Activated T-helper 1 cell treated with anti-CD3 and anti-CD28 coated beads, Interleukin-12 subunit alpha, Interleukin-12 subunit beta, Interleukin-2, Interleukin-4 antibody, amounts not matched to agents 30 ng/mL and 10 ng/mL and 1 ng/mL, durations not matched to agents 14 hours and 24 hours and 36 hours (primary cell): ENCODE measurements at regions of chr2 and their contacts with region 1.

Region 1: GRCh38 chr2:160224060-160224459 is 24.0 kb upstream of the ITGB6 start:
- DNase-seq: peak; percentile 23
- H3K4me3 Mint-ChIP-seq: peak overlapping the region; percentile 39
- H3K27ac Mint-ChIP-seq: peak overlapping the region; percentile 32
- H3K4me1 Mint-ChIP-seq: peaks cover 56% of the 10 kb centered on the region
- H3K27me3 Mint-ChIP-seq: peaks cover 5% of the 10 kb centered on the region

Region 2: DNA sequence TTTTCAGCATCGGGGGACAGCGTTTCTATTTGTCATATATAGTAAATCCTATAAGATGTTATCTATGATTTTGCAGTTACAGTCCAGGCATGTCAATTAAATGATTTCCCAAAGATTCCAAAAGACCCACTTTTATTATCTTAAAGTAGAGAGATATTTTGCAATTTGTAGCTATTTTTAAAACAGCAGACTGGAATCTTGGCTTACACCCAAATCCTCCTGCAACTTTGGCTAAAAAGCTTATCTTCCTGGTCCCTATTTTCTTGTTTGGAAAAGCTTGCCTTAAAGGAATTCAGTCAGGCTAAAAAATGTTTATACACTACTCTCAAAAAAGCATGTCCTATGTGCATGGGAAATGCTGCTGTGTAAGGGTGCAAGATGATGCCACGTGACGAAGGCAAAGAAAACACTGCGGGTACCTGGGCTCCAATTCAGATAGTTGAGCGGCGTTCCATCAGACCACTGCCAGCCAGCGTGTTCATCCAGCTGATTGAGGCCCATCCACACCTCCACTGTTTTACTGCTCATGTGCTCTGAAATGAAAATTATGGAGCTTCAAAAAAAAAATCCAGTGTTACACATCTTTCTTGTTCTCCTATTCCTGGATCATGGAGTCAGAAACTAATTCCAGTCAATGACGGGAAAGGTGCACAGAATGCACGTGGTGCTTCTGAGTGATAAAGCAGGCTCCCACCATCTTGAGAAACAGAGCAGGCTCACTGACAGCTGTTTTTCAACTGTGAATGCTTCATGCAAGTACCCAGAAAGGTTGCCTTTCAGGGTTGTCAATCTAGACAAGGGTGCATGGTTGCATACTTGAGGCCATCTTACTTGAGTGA is 195.4 kb before region 1 on chr2:
- intact Hi-C with region 1: no loop called
- DNase-seq: no peak
- H3K4me3 Mint-ChIP-seq: no peak overlapping the region
- H3K27ac Mint-ChIP-seq: no peak overlapping the region
- H3K4me1 Mint-ChIP-seq: no peaks in the 10 kb centered on the region
- H3K27me3 Mint-ChIP-seq: peaks cover 11% of the 10 kb centered on the region

Region 3: DNA sequence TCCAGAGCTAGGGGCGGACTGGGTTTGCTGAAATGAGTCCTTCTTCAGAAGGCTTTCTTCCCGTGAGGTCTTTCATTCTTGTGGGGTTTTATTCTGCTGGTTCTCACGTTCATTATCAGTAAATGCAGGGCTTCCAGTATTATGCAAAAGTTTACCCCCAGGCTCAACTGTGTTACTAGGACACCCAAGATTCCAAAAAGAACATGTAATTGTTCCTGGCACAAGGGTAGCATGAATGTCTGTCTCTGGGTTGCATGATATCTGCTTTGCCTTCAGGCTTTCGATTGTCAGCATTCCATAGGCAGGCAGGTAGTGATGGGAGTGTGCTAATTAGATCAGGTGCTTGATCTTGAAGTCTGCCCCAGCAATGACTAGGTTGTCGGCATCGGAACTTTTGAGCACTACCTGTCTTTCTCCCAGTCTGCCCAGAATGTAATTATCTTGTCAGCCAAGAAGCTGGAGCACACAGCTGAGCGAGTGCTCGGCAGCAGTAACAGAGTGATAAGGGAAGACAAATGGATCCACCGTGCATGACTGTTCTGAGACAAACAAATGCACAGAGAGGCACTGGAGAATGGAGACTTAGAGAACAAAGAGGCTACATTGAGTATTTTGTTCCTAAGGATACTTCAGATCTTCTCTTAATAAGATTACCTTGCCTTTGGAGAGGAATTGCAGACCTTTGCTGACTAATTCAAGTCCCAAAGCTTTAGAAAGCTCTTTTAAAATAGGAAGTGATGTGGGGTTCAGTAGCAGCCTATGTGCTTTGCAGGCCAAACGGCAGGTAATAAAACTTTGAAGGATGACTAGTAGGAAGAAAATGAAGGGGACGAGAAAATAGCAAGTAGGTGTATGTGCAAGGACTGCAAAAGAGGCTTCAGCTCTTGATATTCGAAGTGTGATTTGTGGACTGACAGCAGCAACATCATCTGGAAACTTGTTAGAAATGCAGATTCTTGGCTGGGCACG is 65.9 kb before region 1 on chr2:
- intact Hi-C with region 1: no loop called
- DNase-seq: no peak
- H3K4me3 Mint-ChIP-seq: no peak overlapping the region
- H3K27ac Mint-ChIP-seq: no peak overlapping the region
- H3K4me1 Mint-ChIP-seq: no peaks in the 10 kb centered on the region
- H3K27me3 Mint-ChIP-seq: peaks cover 7% of the 10 kb centered on the region

Region 4: DNA sequence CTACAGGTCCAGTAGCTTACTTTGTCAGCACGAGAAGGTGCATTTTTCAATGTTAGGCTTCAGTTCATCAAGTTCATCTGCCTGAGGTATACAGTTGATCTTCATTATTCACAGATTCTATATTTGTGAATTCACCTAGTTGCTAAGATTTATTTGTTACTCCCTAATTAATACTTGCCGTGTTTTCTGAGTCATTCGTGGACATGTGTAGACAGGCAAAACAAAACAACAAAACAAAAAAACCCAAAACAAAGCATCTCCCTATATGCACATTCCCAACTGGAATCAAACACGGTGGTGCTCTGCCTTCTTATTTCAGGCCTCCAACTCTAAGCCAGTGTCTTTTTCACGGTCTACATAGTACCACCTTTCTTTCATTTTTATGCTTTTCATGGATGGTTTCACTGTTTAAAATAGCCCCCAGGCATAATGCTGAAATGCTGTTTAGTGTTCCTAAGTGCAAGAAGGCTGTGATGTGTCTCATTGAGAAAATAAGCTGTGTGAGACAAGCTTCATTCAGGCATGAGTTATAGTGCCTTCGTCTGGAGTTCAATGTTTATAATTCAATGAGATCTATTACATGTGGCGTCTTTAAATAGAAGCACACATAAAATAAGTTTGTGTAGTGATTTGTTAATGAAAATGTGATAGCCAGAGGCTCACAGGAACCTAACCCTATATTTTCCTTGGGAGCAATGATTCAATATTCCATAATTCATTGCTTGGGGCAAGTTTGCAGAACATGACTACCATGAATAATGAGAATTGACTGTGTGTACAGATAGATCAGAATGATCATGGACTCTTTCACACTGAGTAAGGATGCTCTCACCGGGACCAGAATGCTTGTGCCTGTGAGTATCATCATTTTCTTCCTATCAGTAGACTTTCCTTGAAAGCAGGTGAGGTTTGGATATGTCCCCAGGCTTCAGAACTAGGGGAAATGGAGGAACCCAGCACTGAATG is 48.6 kb before region 1 on chr2:
- intact Hi-C with region 1: no loop called
- DNase-seq: no peak
- H3K4me3 Mint-ChIP-seq: no peak overlapping the region
- H3K27ac Mint-ChIP-seq: no peak overlapping the region
- H3K4me1 Mint-ChIP-seq: no peaks in the 10 kb centered on the region
- H3K27me3 Mint-ChIP-seq: no peaks in the 10 kb centered on the region

Region 5: GRCh38 chr2:160210599-160211138 is 13.4 kb before region 1 on chr2:
- intact Hi-C with region 1: loop called (anchors 1 kb)
- DNase-seq: peak; percentile 48
- H3K4me3 Mint-ChIP-seq: no peak overlapping the region
- H3K27ac Mint-ChIP-seq: no peak overlapping the region
- H3K4me1 Mint-ChIP-seq: peaks cover 24% of the 10 kb centered on the region
- H3K27me3 Mint-ChIP-seq: peaks cover 17% of the 10 kb centered on the region

Region 6: GRCh38 chr2:160301420-160301819 is 77.4 kb after region 1 on chr2:
- intact Hi-C with region 1: loop called (anchors 2 kb)
- DNase-seq: no peak
- H3K4me3 Mint-ChIP-seq: no peak overlapping the region
- H3K27ac Mint-ChIP-seq: peak overlapping the region; percentile 37
- H3K4me1 Mint-ChIP-seq: peaks cover 49% of the 10 kb centered on the region
- H3K27me3 Mint-ChIP-seq: no peaks in the 10 kb centered on the region

Region 7: GRCh38 chr2:160516547-160517365 is 292.7 kb after region 1 on chr2:
- intact Hi-C with region 1: loop called (anchors 2 kb)
- DNase-seq: no peak
- H3K4me3 Mint-ChIP-seq: peak overlapping the region; percentile 31
- H3K27ac Mint-ChIP-seq: peak overlapping the region; percentile 84
- H3K4me1 Mint-ChIP-seq: peaks cover 42% of the 10 kb centered on the region
- H3K27me3 Mint-ChIP-seq: peaks cover 2% of the 10 kb centered on the region

Region 8: DNA sequence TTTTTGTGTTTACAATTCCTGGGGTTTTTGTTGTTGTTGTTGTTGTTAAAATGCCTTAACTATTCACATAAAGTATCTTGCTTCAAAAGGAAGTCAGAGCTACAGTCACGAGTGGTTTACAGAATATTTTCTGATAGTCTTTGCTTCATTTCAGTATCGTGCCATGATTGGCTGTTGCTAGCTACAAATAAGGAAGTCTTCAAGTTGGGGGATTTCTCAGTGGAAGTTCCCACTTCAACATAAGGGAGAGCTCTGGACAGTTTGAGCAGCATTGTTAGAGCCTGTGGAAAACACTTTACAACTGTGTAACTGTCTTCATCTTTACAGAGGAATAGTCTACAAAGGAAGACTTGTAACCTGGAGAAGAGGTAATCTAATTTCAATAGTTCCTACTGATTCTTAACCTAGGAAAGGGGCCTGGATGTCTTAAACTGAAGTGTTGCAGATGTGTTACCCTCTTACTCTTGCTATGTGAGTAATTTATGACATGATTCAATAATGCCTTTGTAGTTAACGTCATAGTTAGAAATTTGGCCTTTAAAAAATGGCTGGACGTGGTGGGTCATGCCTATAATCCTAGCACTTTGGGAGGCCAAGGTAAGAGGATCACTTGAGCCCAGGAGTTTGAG is 912.8 kb after region 1 on chr2:
- intact Hi-C with region 1: loop called (anchors 5 kb)
- DNase-seq: peak; percentile 64
- H3K4me3 Mint-ChIP-seq: peak overlapping the region; percentile 94
- H3K27ac Mint-ChIP-seq: peak overlapping the region; percentile 98
- H3K4me1 Mint-ChIP-seq: peaks cover 52% of the 10 kb centered on the region
- H3K27me3 Mint-ChIP-seq: no peaks in the 10 kb centered on the region